Left cardiac atrium (tissue), 4 donors: ENCODE measurements at regions of chr17 and their contacts with region 1.

Region 1: DNA sequence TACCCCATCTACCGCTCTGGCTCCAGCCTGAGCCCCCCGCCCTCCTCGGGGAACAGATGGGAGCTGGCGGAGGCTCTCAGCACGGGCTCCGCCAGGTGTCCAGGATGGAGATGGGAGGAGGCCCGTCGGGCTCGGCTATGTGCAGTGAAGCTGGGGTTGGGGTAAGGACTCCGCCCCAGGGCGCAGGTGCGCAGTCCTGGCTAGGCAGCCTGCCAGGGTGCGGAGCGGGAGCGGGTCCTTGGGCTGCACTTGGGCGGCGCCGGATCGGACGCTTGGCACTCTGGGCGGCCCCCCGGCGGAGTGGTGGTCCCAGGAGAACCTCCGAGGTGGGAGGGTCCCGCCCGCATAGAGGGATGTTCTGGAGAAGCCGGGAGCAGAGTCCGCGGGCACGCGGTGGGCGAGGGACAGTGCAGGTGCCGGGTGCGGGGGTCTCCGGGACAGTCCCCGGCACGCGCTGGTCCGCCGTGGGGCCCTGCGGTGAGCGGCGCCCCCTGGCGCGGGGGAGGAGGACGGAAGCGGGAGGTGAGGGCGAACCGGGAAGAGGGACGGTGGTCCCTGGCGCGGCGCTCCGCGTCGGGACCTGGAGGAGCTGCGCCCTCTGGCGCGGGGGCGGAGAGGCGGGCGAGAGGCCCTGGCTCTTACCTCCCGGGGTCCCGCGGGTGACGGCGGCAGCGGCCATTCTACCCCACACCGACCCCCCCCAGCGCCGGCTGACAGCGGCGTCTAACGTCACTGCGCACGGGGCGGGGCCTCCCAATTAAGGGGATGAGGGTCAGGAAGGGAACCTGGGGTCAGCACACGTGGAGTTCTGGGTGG is at the start of gene CAMTA2:
- DNase-seq: peak; percentile 96
- ATAC-seq: peak; percentile 96 to 97
- total RNA-seq, gene CAMTA2: 35.5 to 46.1 TPM

Region 2: DNA sequence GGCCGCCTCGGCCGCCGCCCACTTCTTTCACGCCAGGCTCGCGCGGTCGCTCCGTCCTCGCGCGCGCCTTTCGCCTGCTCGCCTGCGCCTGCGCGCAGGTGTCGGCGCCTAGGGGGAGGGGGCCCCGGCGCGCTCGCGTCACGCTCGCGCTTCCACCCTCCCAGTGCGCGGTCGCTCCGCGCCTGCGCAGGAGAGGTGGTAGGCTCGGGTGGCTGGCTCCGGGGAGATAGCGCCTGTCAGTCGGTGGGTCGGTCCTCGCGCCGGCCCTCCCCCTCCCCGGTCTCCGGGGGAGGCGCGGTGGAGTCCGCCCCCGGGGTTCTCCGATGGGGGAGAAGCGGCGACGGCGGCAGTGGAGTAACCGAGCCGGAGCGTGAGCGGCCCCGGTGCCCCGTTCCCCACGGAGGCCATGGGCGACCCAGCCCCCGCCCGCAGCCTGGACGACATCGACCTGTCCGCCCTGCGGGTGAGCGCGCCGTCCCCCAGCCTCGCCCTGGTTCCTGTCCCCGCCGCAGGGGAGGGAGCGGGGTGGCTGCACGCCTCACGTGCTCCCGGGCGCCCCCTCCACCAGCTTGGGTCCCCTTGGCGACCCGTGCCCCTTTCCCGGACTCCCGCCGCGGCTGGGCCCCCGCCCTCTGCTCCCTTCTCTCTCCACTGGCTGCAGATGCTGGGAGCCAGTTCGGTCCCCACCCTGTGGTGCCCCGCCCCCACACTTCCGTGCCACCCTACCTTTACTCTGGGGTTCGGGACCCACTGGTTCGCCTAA is 153.8 kb before region 1 on chr17 and contains the start of gene MINK1:
- intact Hi-C with region 1: no loop called
- DNase-seq: peak; percentile 91
- ATAC-seq: peak; percentile 97 to 98
- total RNA-seq, gene MINK1: 40.1 to 42.2 TPM

Region 3: GRCh38 chr17:4908301-4908700 is 78.9 kb before region 1 on chr17:
- intact Hi-C with region 1: loop called (anchors 5 to 10 kb)
- DNase-seq: no peak
- ATAC-seq: peak; percentile 18 to 25